Panc1 (cell line): ENCODE measurements at regions of chr9 and their contacts with region 1.

Region 1: GRCh38 chr9:124126571-124127289 is 115.2 kb downstream of the LHX2 start:
- DNase-seq: peak; percentile 57
- ATAC-seq: peak; percentile 79
- H3K4me3 ChIP-seq: no peak overlapping the region
- H3K27ac ChIP-seq: peak overlapping the region; percentile 79
- H3K4me1 ChIP-seq: peaks cover 18% of the 10 kb centered on the region
- H3K27me3 ChIP-seq: no peaks in the 10 kb centered on the region
- CTCF ChIP-seq: peak; percentile 90

Region 2: DNA sequence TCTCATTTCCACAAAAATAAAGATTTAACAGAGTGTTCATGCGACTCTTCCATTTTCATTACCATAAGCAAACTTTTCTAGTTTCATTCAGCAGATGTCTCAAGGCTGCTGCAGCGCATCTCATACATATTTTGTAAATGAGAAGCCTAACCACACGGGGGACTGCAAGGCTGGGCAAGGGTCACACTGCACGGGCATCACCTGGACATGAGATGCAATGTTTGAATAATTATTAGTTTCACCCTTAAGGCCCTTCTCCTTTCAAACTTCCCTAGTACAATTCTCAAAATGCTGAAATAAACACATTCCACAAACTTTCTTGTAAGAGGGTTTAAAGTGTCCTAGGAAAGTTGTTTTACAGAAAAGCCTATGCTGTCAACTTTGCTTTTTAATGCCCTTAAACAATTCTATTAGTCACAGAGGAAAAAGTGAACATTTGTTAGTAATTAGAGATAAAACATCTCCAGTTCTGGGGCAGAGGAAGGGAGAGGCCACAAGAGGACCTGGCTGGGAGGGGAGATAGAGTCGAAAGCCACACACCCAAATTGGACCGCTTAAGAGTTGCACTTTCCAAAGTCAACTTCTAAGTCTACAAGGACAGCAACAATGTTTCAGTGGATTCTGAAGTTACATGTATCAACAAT is 198.1 kb before region 1 on chr9:
- CTCF ChIA-PET with region 1: no interaction called
- POLR2A ChIA-PET with region 1: interaction called, 13 read pairs
- in situ Hi-C with region 1: no loop called
- intact Hi-C with region 1: no loop called
- DNase-seq: no peak
- ATAC-seq: no peak
- H3K4me3 ChIP-seq: peak overlapping the region; percentile 64
- H3K27ac ChIP-seq: peak overlapping the region; percentile 66; the same call in 1 of the 2 replicates
- H3K4me1 ChIP-seq: peaks cover 11% of the 10 kb centered on the region
- H3K27me3 ChIP-seq: no peaks in the 10 kb centered on the region
- CTCF ChIP-seq: no peak

Region 3: DNA sequence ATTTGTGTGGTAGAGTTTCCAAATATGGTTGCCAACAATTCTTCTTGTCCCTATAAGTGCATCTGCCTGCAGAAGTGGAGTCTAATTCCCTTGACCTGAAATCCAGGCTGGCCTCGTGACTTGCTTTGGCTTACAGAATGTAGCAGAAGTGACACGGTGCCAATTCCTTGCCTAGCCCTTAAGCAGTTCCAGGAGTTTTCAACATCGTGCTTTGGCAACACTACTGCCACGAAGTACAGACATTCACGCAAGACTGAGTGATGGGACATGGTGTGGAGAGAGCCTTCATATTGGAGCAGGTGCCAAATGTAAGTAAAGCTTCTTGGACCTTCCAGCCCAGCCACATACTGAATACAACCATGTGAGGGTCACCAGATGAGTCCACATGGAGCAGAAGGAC is 38.1 kb after region 1 on chr9:
- CTCF ChIA-PET with region 1: no interaction called
- POLR2A ChIA-PET with region 1: no interaction called
- in situ Hi-C with region 1: no loop called
- intact Hi-C with region 1: no loop called
- DNase-seq: no peak
- ATAC-seq: no peak
- H3K4me3 ChIP-seq: no peak overlapping the region
- H3K27ac ChIP-seq: no peak overlapping the region
- H3K4me1 ChIP-seq: no peaks in the 10 kb centered on the region
- H3K27me3 ChIP-seq: no peaks in the 10 kb centered on the region
- CTCF ChIP-seq: no peak

Region 4: GRCh38 chr9:124260769-124261553 is 134.2 kb after region 1 on chr9:
- CTCF ChIA-PET with region 1: no interaction called
- POLR2A ChIA-PET with region 1: no interaction called
- in situ Hi-C with region 1: no loop called
- intact Hi-C with region 1: loop called (anchors 5 kb)
- DNase-seq: no peak
- ATAC-seq: peak; percentile 66
- H3K4me3 ChIP-seq: peak overlapping the region; percentile 14 to 44
- H3K27ac ChIP-seq: peak overlapping the region; percentile 98
- H3K4me1 ChIP-seq: peaks cover 64% of the 10 kb centered on the region
- H3K27me3 ChIP-seq: no peaks in the 10 kb centered on the region
- CTCF ChIP-seq: no peak

Region 5: GRCh38 chr9:124309665-124310064 is 182.9 kb after region 1 on chr9:
- CTCF ChIA-PET with region 1: no interaction called
- POLR2A ChIA-PET with region 1: no interaction called
- in situ Hi-C with region 1: no loop called
- intact Hi-C with region 1: loop called (anchors 10 kb)
- DNase-seq: peak; percentile 96
- ATAC-seq: peak; percentile 93
- H3K4me3 ChIP-seq: no peak overlapping the region
- H3K27ac ChIP-seq: peak overlapping the region; percentile 94
- H3K4me1 ChIP-seq: peaks cover 46% of the 10 kb centered on the region
- H3K27me3 ChIP-seq: no peaks in the 10 kb centered on the region
- CTCF ChIP-seq: no peak